Right lobe of liver (tissue), 6 donors: ENCODE measurements at regions of chr13 and their contacts with region 1.

Region 1: GRCh38 chr13:95536632-95537241 is 15.8 kb upstream of the CLDN10 start:
- DNase-seq: no peak
- ATAC-seq: peak in 3 of 4 donors; percentile 26 to 48 (median 34)
- H3K4me3 ChIP-seq: no peak overlapping the region
- H3K27ac ChIP-seq: no peak overlapping the region
- H3K4me1 ChIP-seq: peaks cover 0 to 8% (median 0%) of the 10 kb centered on the region in 4 donors
- H3K27me3 ChIP-seq: no peaks in the 10 kb centered on the region
- CTCF ChIP-seq: peak; percentile 31 to 54 (median 46)
- POLR2A ChIP-seq: no peak

Region 2: DNA sequence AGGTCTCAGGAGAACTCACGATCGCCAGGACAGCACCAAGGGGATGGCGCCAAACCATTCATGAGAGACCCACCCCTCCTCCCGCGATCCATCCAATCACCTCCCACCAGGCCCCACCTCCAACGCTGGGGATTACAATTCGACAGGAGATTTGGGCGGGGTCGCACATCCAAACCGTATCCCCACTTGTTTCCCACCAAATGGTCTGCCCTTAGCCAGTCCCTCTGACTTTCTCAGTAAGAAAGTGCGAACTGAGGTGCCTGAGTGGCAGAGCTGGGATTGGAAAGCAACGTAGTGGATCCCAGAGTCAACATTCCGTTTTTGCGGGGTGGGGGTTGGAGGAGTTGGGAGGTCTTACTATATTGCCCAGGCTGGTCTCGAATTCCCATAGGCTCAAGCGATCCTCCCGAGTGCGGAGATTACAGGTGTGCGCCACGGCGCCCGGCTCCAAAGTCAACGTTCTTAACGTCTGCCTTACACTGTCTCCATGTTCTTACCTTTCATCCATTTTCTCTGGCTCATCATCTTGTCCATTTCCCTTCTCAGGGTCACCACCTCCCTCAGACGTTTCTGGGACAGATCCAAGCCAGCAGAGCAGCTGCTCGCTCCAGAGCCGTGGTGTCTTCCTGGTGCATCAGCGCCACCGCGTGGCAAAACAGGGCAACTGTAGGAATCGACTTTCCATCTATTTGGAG is 132.8 kb before region 1 on chr13:
- intact Hi-C with region 1: no loop called
- DNase-seq: peak; percentile 82 to 86 (median 85)
- ATAC-seq: peak; percentile 96 to 99 (median 98)
- H3K4me3 ChIP-seq: peak overlapping the region in 1 of 3 donors; percentile 26
- H3K27ac ChIP-seq: no peak overlapping the region
- H3K4me1 ChIP-seq: peaks cover 0 to 5% (median 0%) of the 10 kb centered on the region in 4 donors
- H3K27me3 ChIP-seq: no peaks in the 10 kb centered on the region
- CTCF ChIP-seq: peak; percentile 92 to 95 (median 94)
- POLR2A ChIP-seq: no peak

Region 3: DNA sequence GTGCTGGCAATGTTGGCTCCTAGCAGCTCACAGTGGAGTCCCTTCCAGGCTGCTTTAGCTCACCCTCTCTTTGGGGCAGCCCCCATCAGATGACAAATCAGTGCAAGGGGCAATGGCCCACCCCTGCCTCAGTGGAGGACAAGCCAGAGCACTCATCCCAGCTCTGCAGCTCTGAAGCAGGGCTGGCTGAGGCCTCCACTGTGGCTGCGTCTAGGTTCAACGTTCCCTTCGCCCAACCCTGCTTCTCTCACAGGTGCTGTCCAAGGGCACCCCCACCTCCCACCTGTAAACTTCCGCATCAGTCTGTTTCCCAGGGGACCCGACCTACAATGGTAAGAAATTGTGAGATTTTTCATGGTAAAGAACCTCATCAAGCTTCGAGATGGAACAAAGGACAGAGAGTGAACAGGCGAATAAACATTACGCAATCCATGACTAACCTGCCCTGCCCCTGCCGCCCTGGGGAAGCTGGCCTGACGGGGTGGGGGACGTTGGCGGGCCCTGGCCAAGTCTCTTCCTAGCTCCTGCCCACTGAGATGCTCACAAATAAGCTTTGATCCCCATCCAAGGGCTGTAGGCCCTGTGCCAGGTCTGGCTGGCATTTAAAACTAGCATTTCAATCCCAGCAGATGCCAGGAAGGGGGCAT is 67.3 kb after region 1 on chr13:
- intact Hi-C with region 1: loop called in 1 of 2 experiments (anchors 10 kb)
- DNase-seq: peak; percentile 82 to 89 (median 86)
- ATAC-seq: peak; percentile 87 to 93 (median 91)
- H3K4me3 ChIP-seq: no peak overlapping the region
- H3K27ac ChIP-seq: peak overlapping the region in 2 of 3 donors; percentile 19 to 39
- H3K4me1 ChIP-seq: peaks cover 0 to 36% (median 6%) of the 10 kb centered on the region in 4 donors
- H3K27me3 ChIP-seq: no peaks in the 10 kb centered on the region
- CTCF ChIP-seq: no peak
- POLR2A ChIP-seq: no peak

Region 4: DNA sequence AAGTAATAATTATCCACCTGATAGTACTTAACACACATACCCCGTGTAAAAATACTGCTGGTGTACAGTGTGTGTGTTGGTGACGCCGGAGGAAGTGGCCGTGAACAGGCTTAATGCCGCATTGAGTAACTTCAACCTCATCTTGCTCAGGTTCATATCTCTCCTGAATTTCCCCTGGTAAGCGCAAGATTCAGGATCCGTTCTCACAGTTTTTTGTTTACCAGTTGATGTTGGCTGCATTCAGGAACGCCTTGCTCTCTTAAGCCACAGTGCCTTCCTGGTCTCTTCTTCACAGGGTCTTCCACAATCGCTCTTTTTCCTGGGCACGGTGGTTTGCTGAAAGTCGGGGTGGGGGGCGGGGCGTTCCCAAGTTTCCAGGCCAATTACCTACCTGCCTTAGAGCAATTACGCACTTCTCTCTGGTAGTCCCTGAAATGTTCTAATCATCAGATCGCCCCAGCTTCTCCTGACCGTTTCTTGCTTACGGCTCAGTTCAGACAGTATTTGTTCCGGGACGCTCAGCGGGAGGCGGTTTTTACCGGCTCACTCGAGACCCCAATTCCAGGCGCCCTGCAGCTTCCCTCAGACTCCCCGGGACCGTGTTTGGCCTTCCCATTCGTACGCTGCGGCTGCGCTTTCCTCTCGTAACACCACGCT is 139.5 kb after region 1 on chr13:
- intact Hi-C with region 1: no loop called
- DNase-seq: peak in 1 of 3 donors; percentile 52
- ATAC-seq: peak; percentile 15 to 27 (median 23)
- H3K4me3 ChIP-seq: peak overlapping the region; percentile 84 to 85 (median 85)
- H3K27ac ChIP-seq: peak overlapping the region; percentile 83 to 94 (median 91)
- H3K4me1 ChIP-seq: peaks cover 0 to 46% (median 7%) of the 10 kb centered on the region in 4 donors
- H3K27me3 ChIP-seq: no peaks in the 10 kb centered on the region
- CTCF ChIP-seq: no peak
- POLR2A ChIP-seq: no peak

Region 5: GRCh38 chr13:95880331-95880730 is 343.6 kb after region 1 on chr13:
- intact Hi-C with region 1: no loop called
- DNase-seq: no peak
- ATAC-seq: no peak
- H3K4me3 ChIP-seq: no peak overlapping the region
- H3K27ac ChIP-seq: no peak overlapping the region
- H3K4me1 ChIP-seq: no peaks in the 10 kb centered on the region
- H3K27me3 ChIP-seq: no peaks in the 10 kb centered on the region
- CTCF ChIP-seq: no peak
- POLR2A ChIP-seq: no peak